CD14-positive monocyte (primary cell): ENCODE measurements at regions of chr5 and their contacts with region 1.

Region 1: GRCh38 chr5:68129364-68129763 is 86.2 kb upstream of the PIK3R1 start:
- DNase-seq: no peak
- H3K4me3 ChIP-seq: no peak overlapping the region
- H3K4me3 Mint-ChIP-seq: no peak overlapping the region
- H3K27ac ChIP-seq: no peak overlapping the region
- H3K27ac Mint-ChIP-seq: no peak overlapping the region
- H3K4me1 ChIP-seq: no peaks in the 10 kb centered on the region
- H3K4me1 Mint-ChIP-seq: no peaks in the 10 kb centered on the region
- H3K27me3 ChIP-seq: no peaks in the 10 kb centered on the region
- H3K27me3 Mint-ChIP-seq: peaks cover 0 to 8% (median 1%) of the 10 kb centered on the region in 3 donors
- CTCF ChIP-seq: no peak

Region 2: DNA sequence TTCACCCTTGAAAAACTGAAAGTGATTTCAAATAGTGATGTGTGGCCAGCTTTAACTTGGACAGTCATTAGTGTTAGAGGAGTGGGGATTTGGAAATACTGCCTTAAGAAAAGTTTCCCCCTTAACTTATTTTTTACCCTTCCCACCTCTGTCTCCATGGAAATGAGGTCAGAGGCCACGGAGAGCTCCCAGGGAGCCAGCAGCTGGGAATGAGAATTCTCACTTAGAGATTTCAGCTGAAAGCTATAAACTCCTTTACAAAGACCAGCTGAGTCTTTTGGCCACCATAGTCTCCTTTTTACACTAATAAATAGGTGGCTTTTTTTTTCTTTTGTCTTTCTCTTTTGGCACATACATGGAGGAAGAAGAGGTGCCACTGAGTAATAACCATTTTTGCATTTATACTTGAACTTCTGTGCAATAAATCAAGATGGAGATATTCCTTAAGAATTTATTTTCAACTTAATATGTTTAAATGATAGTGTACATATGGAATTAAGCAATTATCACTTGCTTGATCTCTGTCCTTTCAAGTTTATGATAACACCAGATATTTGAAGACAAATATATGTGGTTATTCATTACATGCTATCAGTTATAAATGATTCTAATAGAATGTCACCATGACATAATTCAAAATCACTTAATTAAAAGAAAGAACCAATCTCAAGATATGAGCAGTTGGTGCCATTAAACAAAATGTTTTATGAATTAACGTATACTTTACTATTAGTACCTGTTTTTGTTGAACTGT is 40.7 kb after region 1 on chr5:
- intact Hi-C with region 1: loop called in 1 of 2 experiments (anchors 2 kb)
- DNase-seq: no peak
- H3K4me3 ChIP-seq: no peak overlapping the region
- H3K4me3 Mint-ChIP-seq: no peak overlapping the region
- H3K27ac ChIP-seq: no peak overlapping the region
- H3K27ac Mint-ChIP-seq: no peak overlapping the region
- H3K4me1 ChIP-seq: no peaks in the 10 kb centered on the region
- H3K4me1 Mint-ChIP-seq: no peaks in the 10 kb centered on the region
- H3K27me3 ChIP-seq: no peaks in the 10 kb centered on the region
- H3K27me3 Mint-ChIP-seq: no peaks in the 10 kb centered on the region
- CTCF ChIP-seq: no peak

Region 3: DNA sequence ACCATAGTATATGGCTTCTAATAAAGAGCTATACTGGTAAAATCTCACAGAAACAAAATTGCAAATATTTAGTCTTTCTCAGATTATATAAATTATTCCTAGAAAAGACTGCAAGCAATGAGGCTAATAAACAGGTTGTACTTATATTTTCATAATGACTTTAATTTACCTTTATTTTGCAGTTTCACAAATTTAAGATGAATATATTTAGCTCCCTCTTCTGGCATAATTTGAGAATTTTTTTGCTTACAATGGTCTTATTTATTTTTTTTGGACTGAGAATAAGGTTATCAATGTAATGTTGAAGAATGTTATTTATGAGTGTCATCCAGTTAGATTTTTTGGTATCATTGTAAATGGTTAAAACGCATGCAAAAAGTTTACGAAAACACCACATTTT is 142.9 kb after region 1 on chr5:
- intact Hi-C with region 1: no loop called
- DNase-seq: no peak
- H3K4me3 ChIP-seq: no peak overlapping the region
- H3K4me3 Mint-ChIP-seq: no peak overlapping the region
- H3K27ac ChIP-seq: peak overlapping the region in 1 of 2 donors; percentile 21
- H3K27ac Mint-ChIP-seq: no peak overlapping the region
- H3K4me1 ChIP-seq: peaks cover 12 to 21% of the 10 kb centered on the region in 2 donors
- H3K4me1 Mint-ChIP-seq: peaks cover 25% of the 10 kb centered on the region
- H3K27me3 ChIP-seq: no peaks in the 10 kb centered on the region
- H3K27me3 Mint-ChIP-seq: no peaks in the 10 kb centered on the region
- CTCF ChIP-seq: peak; percentile 58